Left ventricle myocardium inferior (tissue), 1 donor: ENCODE measurements at regions of chr1 and their contacts with region 1.

Region 1: GRCh38 chr1:91282695-91283420 is 121.8 kb downstream of the HFM1 start:
- DNase-seq: no peak
- H3K4me3 ChIP-seq: peak overlapping the region; percentile 41
- H3K27ac ChIP-seq: no peak overlapping the region
- H3K4me1 ChIP-seq: peaks cover 7% of the 10 kb centered on the region
- H3K27me3 ChIP-seq: no peaks in the 10 kb centered on the region
- CTCF ChIP-seq: peak; percentile 84

Region 2: DNA sequence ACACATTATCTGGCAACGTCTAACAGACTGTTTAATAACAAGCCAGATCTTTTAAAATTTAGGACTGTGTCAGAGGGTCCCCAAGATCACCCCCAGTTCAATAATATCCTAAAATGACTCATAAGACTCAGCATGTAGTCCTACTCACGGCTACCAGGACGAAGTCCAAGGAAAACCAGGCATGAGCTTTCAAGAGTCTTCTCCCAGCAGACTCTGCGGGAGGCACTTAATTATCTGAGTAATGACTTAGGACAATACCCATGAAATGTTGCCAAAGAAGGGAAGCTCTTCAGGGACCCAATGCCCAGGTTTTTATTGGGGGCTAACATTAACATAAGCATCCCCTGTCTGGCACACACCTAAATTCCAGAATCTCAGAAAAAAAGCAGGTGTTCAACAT is 114.7 kb after region 1 on chr1:
- intact Hi-C with region 1: loop called (anchors 5 kb)
- DNase-seq: no peak
- H3K4me3 ChIP-seq: no peak overlapping the region
- H3K27ac ChIP-seq: no peak overlapping the region
- H3K4me1 ChIP-seq: no peaks in the 10 kb centered on the region
- H3K27me3 ChIP-seq: no peaks in the 10 kb centered on the region
- CTCF ChIP-seq: no peak